PC-9 (cell line): ENCODE measurements at regions of chr14 and their contacts with region 1.

Region 1: GRCh38 chr14:21557084-21557901 is 22.6 kb downstream of the OR10G3 start:
- DNase-seq: peak; percentile 57 to 77
- H3K4me3 ChIP-seq: peak overlapping the region; percentile 6; the same call in 1 of the 2 replicates
- H3K27ac ChIP-seq: no peak overlapping the region
- H3K4me1 ChIP-seq: no peaks in the 10 kb centered on the region; the same call in 1 of the 2 replicates
- H3K27me3 ChIP-seq: no peaks in the 10 kb centered on the region
- CTCF ChIP-seq: peak; percentile 79

Region 2: GRCh38 chr14:21367582-21368144 is 189.6 kb before region 1 on chr14:
- CTCF ChIA-PET with region 1: no interaction called
- POLR2A ChIA-PET with region 1: no interaction called
- intact Hi-C with region 1: no loop called
- DNase-seq: no peak
- H3K4me3 ChIP-seq: no peak overlapping the region
- H3K27ac ChIP-seq: no peak overlapping the region
- H3K4me1 ChIP-seq: no peaks in the 10 kb centered on the region
- H3K27me3 ChIP-seq: no peaks in the 10 kb centered on the region
- CTCF ChIP-seq: no peak

Region 3: DNA sequence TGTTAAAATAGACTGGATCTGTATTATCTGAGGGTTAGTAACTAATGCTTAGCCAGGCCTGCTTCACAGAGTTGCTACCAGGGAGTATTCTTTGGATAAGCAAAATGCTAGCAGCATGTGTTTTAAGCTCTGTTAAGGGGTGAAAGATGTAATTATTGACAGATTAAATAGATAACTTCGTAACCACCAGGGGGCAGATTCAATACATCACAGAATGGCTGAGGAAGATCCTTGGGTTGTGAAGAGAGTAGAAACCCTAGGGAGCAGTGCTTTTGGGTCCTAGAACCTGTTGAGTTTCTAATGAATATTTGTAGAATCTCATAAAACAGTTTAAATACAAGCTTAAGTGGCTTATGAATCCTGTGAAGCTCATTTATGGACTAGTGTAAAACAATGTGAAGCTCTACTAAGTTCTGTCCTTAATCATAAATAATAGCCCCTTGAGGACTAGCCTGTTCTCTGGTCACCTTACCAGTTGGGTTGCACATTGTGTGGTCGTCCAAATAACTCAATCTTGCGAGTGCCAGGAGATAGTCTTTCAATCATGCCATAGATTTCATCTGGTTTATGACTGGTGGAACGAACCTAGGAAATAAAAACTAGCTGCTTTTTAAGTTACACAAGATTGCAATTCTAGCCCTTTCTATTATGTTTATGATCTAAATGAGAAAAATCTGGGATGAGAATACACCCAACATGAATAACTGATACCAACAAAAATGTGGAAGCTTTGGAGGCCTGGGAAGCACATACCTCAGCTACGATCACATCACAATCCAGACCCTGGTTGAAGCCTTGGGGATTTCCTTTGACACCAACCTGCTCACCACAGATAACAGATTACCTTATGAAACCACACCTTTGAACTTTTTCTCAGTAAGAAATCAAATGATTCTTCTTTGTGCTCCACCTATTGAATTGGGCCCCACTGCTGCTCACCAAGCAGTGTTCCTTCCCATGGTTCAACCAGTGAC is 58.5 kb before region 1 on chr14:
- CTCF ChIA-PET with region 1: interaction called, 3 read pairs
- POLR2A ChIA-PET with region 1: interaction called, 3 read pairs
- intact Hi-C with region 1: loop called (anchors 1 kb)
- DNase-seq: no peak
- H3K4me3 ChIP-seq: no peak overlapping the region
- H3K27ac ChIP-seq: no peak overlapping the region
- H3K4me1 ChIP-seq: no peaks in the 10 kb centered on the region
- H3K27me3 ChIP-seq: no peaks in the 10 kb centered on the region
- CTCF ChIP-seq: peak; percentile 68

Region 4: GRCh38 chr14:21525962-21526671 is 31.2 kb before region 1 on chr14 and contains the start of gene SALL2:
- CTCF ChIA-PET with region 1: interaction called, 13 read pairs
- POLR2A ChIA-PET with region 1: interaction called, 5 read pairs
- intact Hi-C with region 1: no loop called
- DNase-seq: peak; percentile 35 to 61
- H3K4me3 ChIP-seq: peak within 1 kb of the TSS; percentile 57; the same call in 1 of the 2 replicates
- H3K27ac ChIP-seq: no peak within 1 kb of the TSS
- H3K4me1 ChIP-seq: peaks cover 21% of the 10 kb centered on the region
- H3K27me3 ChIP-seq: no peaks in the 10 kb centered on the region
- CTCF ChIP-seq: no peak
- total RNA-seq, gene SALL2: 10.3 and 10.9 TPM in 2 replicates

Region 5: GRCh38 chr14:21668377-21668776 is 111.1 kb after region 1 on chr14:
- CTCF ChIA-PET with region 1: no interaction called
- POLR2A ChIA-PET with region 1: no interaction called
- intact Hi-C with region 1: no loop called
- DNase-seq: no peak
- H3K4me3 ChIP-seq: no peak overlapping the region
- H3K27ac ChIP-seq: no peak overlapping the region
- H3K4me1 ChIP-seq: no peaks in the 10 kb centered on the region
- H3K27me3 ChIP-seq: no peaks in the 10 kb centered on the region
- CTCF ChIP-seq: no peak

Region 6: DNA sequence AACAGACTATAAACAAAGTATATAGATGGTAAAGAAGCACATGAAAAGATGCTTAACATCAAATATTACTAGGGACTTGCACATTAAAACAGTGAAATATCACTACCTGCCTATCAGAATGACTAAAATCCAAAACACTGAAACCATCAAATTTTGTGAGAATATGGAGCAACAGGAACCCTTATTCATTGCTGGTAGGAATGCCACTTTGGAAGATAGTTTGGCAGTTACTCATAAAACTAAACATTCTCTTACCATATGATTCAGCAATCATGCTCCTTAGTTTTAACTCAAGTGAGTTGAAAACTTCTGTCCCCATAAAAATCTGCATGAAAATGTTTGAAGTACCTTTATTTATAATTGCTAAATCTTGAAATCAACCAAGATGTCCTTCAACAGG is 734.1 kb after region 1 on chr14:
- CTCF ChIA-PET with region 1: no interaction called
- POLR2A ChIA-PET with region 1: no interaction called
- intact Hi-C with region 1: no loop called
- DNase-seq: peak in 1 of 2 experiments; percentile 39
- H3K4me3 ChIP-seq: no peak overlapping the region
- H3K27ac ChIP-seq: 0 out of 2 replicates have a peak overlapping the region, but pooled peaks have one; percentile 32
- H3K4me1 ChIP-seq: peaks cover 36% of the 10 kb centered on the region
- H3K27me3 ChIP-seq: no peaks in the 10 kb centered on the region
- CTCF ChIP-seq: no peak

Region 7: DNA sequence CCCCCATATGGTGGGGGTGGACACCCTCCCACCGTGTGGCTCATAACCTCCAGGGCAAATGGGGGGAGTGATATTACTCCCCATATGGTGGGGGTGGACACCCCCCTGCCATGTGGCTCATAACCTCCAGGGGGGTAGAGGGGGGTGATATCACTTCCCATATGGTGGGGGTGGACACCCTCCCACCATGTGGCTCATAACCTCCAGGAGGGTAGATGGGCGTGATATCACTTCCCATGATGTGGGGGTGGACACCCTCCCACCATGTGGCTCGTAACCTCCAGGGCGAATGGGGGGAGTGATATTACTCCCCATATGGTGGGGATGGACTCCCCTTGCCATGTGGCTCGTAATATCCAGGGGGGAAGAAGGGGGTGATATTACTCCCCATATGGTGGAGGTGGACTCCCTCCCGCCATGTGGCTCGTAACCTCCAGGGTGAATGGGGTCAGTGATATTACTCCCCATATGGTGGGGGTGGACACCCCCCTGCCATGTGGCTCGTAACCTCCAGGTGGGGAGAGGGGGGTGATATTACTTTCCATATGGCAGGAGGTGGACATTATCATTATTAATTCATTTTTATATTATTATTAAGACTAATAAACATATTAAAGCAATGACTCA is 1158.0 kb after region 1 on chr14:
- CTCF ChIA-PET with region 1: no interaction called
- POLR2A ChIA-PET with region 1: no interaction called
- intact Hi-C with region 1: no loop called
- DNase-seq: no peak
- H3K4me3 ChIP-seq: no peak overlapping the region
- H3K27ac ChIP-seq: no peak overlapping the region
- H3K4me1 ChIP-seq: no peaks in the 10 kb centered on the region
- H3K27me3 ChIP-seq: no peaks in the 10 kb centered on the region
- CTCF ChIP-seq: no peak